Gastrocnemius medialis (tissue), 4 donors: ENCODE measurements at regions of chr14 and their contacts with region 1.

Region 1: GRCh38 chr14:77707724-77708408 is at the starts of genes ALKBH1 and SLIRP:
- DNase-seq: peak; percentile 81
- ATAC-seq: peak; percentile 98
- H3K4me3 ChIP-seq: peak within 1 kb of the TSS; percentile 81 to 97 (median 92)
- H3K27ac ChIP-seq: peak within 1 kb of the TSS; percentile 74 to 87 (median 80)
- H3K4me1 ChIP-seq: peaks cover 31 to 34% of the 10 kb centered on the region in 2 donors
- H3K27me3 ChIP-seq: no peaks in the 10 kb centered on the region
- CTCF ChIP-seq: peak in 1 of 5 experiments; percentile 6
- POLR2A ChIP-seq: peak; percentile 65 to 76
- total RNA-seq, gene ALKBH1: 12.2 to 16.2 (median 13.6) TPM
- total RNA-seq, gene SLIRP: 293 to 550 (median 332) TPM

Region 2: GRCh38 chr14:77616454-77617229 is 91.2 kb before region 1 on chr14 and contains the start of gene SPTLC2:
- in situ Hi-C with region 1: no loop called
- intact Hi-C with region 1: loop called (anchors 2 kb)
- DNase-seq: peak; percentile 98 to 99
- ATAC-seq: peak; percentile 96 to 97
- H3K4me3 ChIP-seq: peak within 1 kb of the TSS; percentile 71 to 84 (median 80)
- H3K27ac ChIP-seq: peak within 1 kb of the TSS; percentile 67 to 76 (median 74)
- H3K4me1 ChIP-seq: peaks cover 12 to 18% of the 10 kb centered on the region in 2 donors
- H3K27me3 ChIP-seq: no peaks in the 10 kb centered on the region
- CTCF ChIP-seq: peak in 1 of 5 experiments; percentile 2
- POLR2A ChIP-seq: peak; percentile 55 to 73
- total RNA-seq, gene SPTLC2: 6.5 to 10.4 (median 7.0) TPM

Region 3: DNA sequence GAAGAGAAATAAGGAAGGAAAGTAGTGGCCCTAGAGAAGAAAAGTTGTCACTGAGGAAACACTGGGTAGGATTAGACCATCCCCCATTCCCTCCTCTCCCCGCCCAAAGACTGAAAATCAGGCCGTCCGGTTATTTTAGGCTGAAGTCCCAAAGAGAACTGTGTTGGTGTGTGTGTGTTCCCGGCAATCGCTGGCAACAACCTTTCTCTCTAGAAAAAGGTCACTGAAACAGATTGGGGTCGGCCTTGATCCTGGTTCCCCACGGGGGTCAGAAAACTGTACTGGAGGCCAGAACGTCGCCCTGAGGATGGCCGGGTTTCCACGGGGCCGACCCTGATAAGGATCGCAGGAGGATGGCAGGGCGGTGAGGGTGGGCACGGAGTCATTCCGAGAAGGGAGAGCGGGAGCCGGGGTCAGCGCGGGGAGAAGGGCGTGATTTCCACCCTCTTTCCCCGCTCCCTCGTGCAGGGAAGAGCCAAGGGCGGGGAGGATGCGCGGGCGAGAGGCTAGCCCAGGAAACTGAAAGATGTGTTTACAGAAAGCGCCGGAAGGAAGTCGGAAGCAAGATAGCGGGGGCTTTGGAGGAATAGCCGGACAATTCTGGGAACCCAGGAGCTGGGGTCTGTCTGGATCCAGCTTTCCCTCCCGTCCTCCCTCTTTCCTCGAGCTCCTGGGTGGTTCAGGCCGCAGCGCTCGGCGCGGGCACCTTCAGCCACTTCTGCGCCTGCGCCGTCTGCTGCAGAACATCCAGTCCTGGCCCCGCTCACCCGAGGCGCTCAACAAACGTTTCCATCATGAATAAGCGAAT is 66.1 kb before region 1 on chr14:
- in situ Hi-C with region 1: no loop called
- intact Hi-C with region 1: no loop called
- DNase-seq: peak; percentile 38 to 56
- ATAC-seq: peak; percentile 62 to 68
- H3K4me3 ChIP-seq: peak overlapping the region; percentile 44 to 64 (median 50)
- H3K27ac ChIP-seq: peak overlapping the region; percentile 55 to 84 (median 76)
- H3K4me1 ChIP-seq: peaks cover 7 to 8% of the 10 kb centered on the region in 2 donors
- H3K27me3 ChIP-seq: peaks cover 0 to 4% (median 0%) of the 10 kb centered on the region in 3 donors
- CTCF ChIP-seq: no peak
- POLR2A ChIP-seq: peak in 1 of 2 donors; percentile 21

Region 4: DNA sequence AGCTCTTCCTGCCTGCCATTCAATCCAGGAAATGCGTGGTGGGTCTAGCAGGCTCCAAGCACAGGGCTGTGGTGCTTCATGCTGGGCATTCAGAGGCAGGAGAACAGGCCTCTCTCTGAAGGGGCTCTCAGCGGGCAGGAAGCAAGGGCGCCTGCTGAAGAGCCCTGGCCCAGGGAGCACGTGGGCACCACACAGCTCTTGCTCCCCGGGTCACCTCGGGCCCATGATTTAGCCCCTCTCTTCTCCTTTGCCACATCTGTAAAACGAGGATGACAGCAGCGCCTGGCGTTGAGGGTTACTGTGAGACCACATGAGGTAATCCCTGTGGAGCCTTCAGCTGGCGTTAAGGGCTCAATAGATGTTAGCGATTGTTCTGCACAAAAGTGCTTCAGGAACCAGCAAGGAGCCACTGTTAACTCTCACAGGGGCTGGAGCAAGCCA is 53.8 kb before region 1 on chr14:
- in situ Hi-C with region 1: no loop called
- intact Hi-C with region 1: loop called (anchors 2 kb)
- DNase-seq: no peak
- ATAC-seq: no peak
- H3K4me3 ChIP-seq: no peak overlapping the region
- H3K27ac ChIP-seq: no peak overlapping the region
- H3K4me1 ChIP-seq: no peaks in the 10 kb centered on the region
- H3K27me3 ChIP-seq: no peaks in the 10 kb centered on the region
- CTCF ChIP-seq: no peak
- POLR2A ChIP-seq: no peak

Region 5: GRCh38 chr14:77799863-77800730 is 92.2 kb after region 1 on chr14 and contains the start of gene ADCK1:
- in situ Hi-C with region 1: no loop called
- intact Hi-C with region 1: loop called (anchors 1 kb)
- DNase-seq: peak; percentile 86 to 97
- ATAC-seq: peak; percentile 93 to 96
- H3K4me3 ChIP-seq: peak within 1 kb of the TSS; percentile 66 to 94 (median 89)
- H3K27ac ChIP-seq: peak within 1 kb of the TSS; percentile 87 to 98 (median 96)
- H3K4me1 ChIP-seq: peaks cover 12 to 14% of the 10 kb centered on the region in 2 donors
- H3K27me3 ChIP-seq: no peaks in the 10 kb centered on the region
- CTCF ChIP-seq: peak; percentile 32 to 52 (median 41)
- POLR2A ChIP-seq: peak; percentile 75 to 83
- total RNA-seq, gene ADCK1: 3.5 to 11.0 (median 5.5) TPM